Transverse colon (tissue), 4 donors: ENCODE measurements at regions of chr19 and their contacts with region 1.

Region 1: DNA sequence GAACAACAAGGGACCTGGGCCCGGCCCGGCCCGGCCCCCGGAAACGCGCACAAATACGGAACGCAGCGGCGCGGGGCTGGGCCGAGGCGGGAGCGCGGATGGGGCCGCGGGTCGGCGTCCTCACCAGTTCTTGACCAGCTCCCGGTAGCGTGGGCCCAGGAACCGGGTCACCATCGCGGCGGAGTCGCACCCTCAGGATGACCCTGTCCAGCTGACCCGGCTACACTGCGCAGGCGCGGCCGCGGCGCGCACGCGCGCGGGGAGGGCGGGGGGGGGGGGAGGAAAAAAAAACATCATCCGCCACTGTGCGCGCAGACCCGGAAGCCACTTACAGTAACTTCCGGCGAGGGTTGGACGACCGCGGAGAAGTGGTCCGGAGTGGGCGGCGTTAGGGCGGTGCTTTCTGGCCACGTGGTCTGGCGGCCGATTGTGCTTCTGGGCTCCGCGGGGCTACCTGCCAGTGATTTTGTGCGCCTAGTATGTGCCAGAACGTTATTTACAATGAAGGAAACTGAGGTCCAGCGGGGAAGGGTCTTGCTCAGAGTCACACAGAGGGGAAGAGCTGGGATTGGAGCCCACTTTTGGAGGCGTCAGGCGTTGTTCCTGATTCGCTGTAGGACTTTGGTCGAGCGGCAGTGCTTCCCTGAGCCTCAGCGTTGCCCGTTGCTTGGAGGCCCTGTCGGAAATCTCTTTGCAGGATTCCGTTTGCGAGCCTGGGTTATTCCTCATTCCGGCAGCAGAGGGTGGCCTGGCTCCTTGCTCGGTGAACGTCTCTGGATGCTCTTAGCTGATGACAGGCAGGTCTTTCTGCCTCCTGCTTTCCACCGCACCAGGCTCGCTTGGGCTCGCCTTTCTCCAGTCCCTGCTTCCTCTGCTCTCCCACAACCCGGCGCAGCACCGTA is at the start of gene UQCR11:
- DNase-seq: peak; percentile 96
- H3K4me3 ChIP-seq: peak within 1 kb of the TSS; percentile 88 to 100 (median 96)
- H3K27ac ChIP-seq: peak within 1 kb of the TSS; percentile 91 to 97 (median 94)
- H3K4me1 ChIP-seq: peaks cover 8 to 44% (median 33%) of the 10 kb centered on the region in 4 donors
- H3K27me3 ChIP-seq: no peaks in the 10 kb centered on the region
- CTCF ChIP-seq: peak; percentile 45 to 88 (median 63)
- EP300 ChIP-seq: no peak
- POLR2A ChIP-seq: no peak
- total RNA-seq, gene UQCR11: 19.9 to 120 (median 60.8) TPM

Region 2: DNA sequence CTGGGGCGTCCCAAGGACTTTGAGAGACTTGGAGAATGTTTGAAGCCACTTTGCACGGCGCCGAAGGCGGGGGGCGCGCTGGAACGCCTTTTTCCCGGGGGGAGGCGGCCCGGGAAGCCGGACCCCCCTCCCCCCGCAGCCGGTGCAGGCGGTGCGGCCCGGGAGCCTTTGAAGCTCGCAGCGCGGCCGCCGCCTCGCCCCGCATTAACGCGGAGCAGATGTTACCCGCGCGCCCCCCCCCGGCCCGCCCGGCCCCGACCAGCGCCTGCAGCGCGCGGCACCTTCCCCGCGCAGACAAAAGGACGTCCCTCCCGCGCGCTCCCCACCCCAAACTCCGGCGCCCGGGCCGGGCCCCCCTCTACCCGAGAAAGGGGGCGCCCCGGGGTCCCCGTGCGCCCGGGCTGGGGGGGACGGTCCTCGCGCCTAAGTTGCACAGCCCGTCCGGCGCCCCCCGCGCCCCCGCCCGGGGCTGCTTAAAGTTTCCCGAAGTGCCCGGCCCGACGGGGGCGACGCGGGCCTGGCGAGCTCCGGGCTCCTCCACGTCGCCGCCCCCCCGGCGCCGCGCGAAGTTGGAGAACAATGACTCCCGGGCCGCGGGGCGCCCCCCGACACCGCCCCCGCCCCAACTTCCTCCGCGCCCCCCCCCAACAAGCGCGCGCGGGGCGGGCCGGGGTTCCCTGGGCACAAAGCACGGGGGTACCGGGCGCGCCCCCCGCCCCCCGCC is 46.2 kb after region 1 on chr19:
- in situ Hi-C with region 1: no loop called
- intact Hi-C with region 1: loop called (anchors 1 kb)
- DNase-seq: peak; percentile 58
- H3K4me3 ChIP-seq: peak overlapping the region; percentile 73 to 99 (median 97)
- H3K27ac ChIP-seq: peak overlapping the region; percentile 88 to 93 (median 90)
- H3K4me1 ChIP-seq: peaks cover 8 to 21% (median 11%) of the 10 kb centered on the region in 4 donors
- H3K27me3 ChIP-seq: no peaks in the 10 kb centered on the region
- CTCF ChIP-seq: no peak
- EP300 ChIP-seq: no peak
- POLR2A ChIP-seq: no peak

Region 3: GRCh38 chr19:1863726-1864480 is 258.4 kb after region 1 on chr19:
- in situ Hi-C with region 1: no loop called
- intact Hi-C with region 1: no loop called
- DNase-seq: peak; percentile 92
- H3K4me3 ChIP-seq: peak overlapping the region; percentile 47 to 81 (median 74)
- H3K27ac ChIP-seq: peak overlapping the region; percentile 88 to 96 (median 94)
- H3K4me1 ChIP-seq: peaks cover 34 to 49% (median 41%) of the 10 kb centered on the region in 4 donors
- H3K27me3 ChIP-seq: no peaks in the 10 kb centered on the region
- CTCF ChIP-seq: no peak
- EP300 ChIP-seq: no peak
- POLR2A ChIP-seq: peak; percentile 31